ENCODE measurements at regions of chr14 and their contacts with region 1.

Region 1: GRCh38 chr14:50116181-50116956 is at the start of gene VCPKMT:
- DNase-seq: peak; percentile 96
- H3K4me3 ChIP-seq: peak within 1 kb of the TSS; percentile 78
- H3K27ac ChIP-seq: peak within 1 kb of the TSS; percentile 65
- H3K4me1 ChIP-seq: peaks cover 36% of the 10 kb centered on the region
- CTCF ChIP-seq: no peak
- total RNA-seq, gene VCPKMT: 13.3 and 13.5 TPM in 2 replicates

Region 2: GRCh38 chr14:49867831-49868723 is 248.3 kb before region 1 on chr14:
- CTCF ChIA-PET with region 1: interaction called, 6 read pairs
- POLR2A ChIA-PET with region 1: interaction called, 11 read pairs
- intact Hi-C with region 1: no loop called
- DNase-seq: peak; percentile 97
- H3K4me3 ChIP-seq: peak overlapping the region; percentile 71
- H3K27ac ChIP-seq: peak overlapping the region; percentile 75
- H3K4me1 ChIP-seq: peaks cover 50% of the 10 kb centered on the region
- CTCF ChIP-seq: no peak; the same call in 1 of the 2 replicates

Region 3: DNA sequence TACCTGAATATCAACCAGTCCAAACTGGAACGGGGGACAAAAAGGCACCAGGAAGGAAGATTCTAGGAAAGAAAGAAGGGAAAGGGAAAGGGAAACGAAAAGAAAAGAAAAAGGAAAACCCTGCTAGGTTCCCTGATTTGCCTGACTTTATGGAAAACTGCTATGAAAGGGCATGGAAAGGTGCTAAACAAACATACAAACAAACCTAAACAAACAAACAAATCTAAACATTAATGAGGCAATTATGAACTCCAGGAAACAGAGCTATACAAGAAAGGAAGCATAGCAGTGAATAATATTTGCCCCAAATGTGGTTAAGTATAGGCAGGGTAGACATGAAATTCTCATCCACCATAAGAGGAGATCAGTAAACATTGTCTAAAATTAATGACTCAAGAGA is 11.9 kb after region 1 on chr14:
- CTCF ChIA-PET with region 1: no interaction called
- POLR2A ChIA-PET with region 1: interaction called, 18 read pairs
- intact Hi-C with region 1: no loop called
- DNase-seq: no peak
- H3K4me3 ChIP-seq: no peak overlapping the region
- H3K27ac ChIP-seq: no peak overlapping the region
- H3K4me1 ChIP-seq: no peaks in the 10 kb centered on the region
- CTCF ChIP-seq: no peak

Region 4: DNA sequence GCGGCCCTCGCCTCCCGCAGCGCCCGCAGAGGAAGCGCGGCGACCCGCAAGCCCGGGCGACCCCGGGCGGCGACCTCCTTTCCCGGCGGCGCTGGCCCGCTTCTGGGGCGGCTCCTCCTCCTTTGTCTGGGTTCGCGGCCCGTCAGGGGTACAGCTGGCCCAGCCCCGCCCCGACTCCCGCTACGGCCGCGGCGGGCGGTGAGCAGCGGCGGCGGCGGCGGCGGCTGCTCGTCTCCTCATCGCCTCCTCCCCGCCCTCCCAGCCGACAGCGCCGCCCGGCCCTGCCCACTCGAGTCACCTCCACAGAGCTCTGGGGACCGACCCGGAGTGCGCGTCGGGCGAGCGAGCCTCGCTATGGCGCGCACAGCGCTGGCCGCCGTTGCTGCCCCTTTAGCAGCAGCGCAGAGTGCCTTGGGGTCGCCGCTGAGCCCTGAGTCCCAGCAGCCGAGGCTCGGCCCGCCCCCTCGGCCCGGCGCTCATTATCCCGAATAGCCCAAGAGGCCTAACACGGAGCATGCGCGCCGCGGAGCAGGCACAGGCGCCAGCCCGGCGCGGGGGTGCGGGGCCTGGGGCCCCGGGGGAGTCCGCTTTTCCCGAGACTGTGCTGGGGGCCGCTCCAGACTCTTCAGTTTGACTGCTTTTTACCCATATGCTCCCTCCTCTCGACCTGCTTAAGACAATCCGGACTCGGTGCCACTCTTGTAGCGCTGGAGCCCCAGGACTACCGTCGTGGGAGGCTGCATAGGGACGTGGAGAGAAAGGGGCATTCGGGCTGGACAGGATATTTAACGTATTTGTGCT is 115.3 kb after region 1 on chr14 and contains the start of gene SOS2:
- CTCF ChIA-PET with region 1: no interaction called
- POLR2A ChIA-PET with region 1: no interaction called
- intact Hi-C with region 1: loop called (anchors 2 kb)
- DNase-seq: peak; percentile 91
- H3K4me3 ChIP-seq: peak within 1 kb of the TSS; percentile 94
- H3K27ac ChIP-seq: peak within 1 kb of the TSS; percentile 81
- H3K4me1 ChIP-seq: peaks cover 18% of the 10 kb centered on the region
- CTCF ChIP-seq: 0 out of 2 replicates have a peak, but pooled peaks have one; percentile 12
- total RNA-seq, gene SOS2: 13.5 and 16.5 TPM in 2 replicates

Region 5: GRCh38 chr14:50311975-50312733 is 195.8 kb after region 1 on chr14 and contains the starts of genes DMAC2L and L2HGDH:
- CTCF ChIA-PET with region 1: no interaction called
- POLR2A ChIA-PET with region 1: interaction called, 12 read pairs
- intact Hi-C with region 1: no loop called
- DNase-seq: peak; percentile 97
- H3K4me3 ChIP-seq: peak within 1 kb of the TSS; percentile 73
- H3K27ac ChIP-seq: peak within 1 kb of the TSS; percentile 77
- H3K4me1 ChIP-seq: peaks cover 16% of the 10 kb centered on the region
- CTCF ChIP-seq: 0 out of 2 replicates have a peak, but pooled peaks have one; percentile 3
- total RNA-seq, gene DMAC2L: 5.8 and 13.8 TPM in 2 replicates
- total RNA-seq, gene L2HGDH: 8.7 and 10.0 TPM in 2 replicates